CD8-positive, alpha-beta memory T cell (primary cell): ENCODE measurements at regions of chr2 and their contacts with region 1.

Region 1: GRCh38 chr2:190221429-190221828 is 98.2 kb downstream of the HIBCH start:
- DNase-seq: no peak
- H3K4me3 ChIP-seq: no peak overlapping the region
- H3K4me3 Mint-ChIP-seq: no peak overlapping the region
- H3K27ac ChIP-seq: no peak overlapping the region
- H3K27ac Mint-ChIP-seq: no peak overlapping the region
- H3K4me1 ChIP-seq: no peaks in the 10 kb centered on the region
- H3K4me1 Mint-ChIP-seq: peaks cover 0 to 5% (median 5%) of the 10 kb centered on the region in 3 donors
- H3K27me3 ChIP-seq: no peaks in the 10 kb centered on the region
- H3K27me3 Mint-ChIP-seq: no peaks in the 10 kb centered on the region

Region 2: DNA sequence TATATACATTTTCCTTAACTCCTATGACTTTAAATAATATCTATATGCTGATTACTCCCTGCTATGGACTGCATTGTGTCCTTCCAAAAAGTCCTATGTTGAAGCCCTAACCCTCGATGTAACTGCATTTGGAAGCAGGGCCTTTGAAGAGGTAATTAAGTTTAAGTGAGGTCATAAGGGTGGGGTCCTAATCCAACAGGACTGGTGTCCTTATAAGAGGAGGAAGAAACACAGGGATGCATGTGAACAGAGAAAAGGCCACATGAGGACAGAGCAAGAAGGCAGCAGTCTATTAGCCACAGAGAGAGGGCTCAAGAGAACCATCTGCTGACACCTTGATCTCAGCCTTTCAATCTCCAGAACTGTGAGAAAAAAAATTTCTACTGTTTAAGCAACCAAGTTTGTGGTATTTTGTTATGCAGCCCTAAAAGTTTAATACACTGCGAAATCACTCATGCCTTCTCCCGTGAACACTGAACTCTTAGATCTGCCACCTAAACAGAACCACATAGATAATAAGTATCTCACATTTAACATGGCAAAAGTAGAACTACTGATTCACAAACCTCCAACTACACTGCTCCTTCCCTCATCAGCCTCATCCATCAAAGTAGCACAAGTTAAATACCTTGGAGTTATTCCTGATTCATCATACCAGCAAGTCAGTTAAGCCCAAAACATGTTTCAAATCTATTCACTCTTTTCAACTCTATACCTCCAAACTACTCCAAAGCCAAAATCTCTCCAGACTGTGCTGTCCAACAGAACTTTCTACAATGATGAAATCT is 32.8 kb after region 1 on chr2:
- CTCF ChIA-PET with region 1: no interaction called
- POLR2A ChIA-PET with region 1: no interaction called
- DNase-seq: no peak
- H3K4me3 ChIP-seq: no peak overlapping the region
- H3K4me3 Mint-ChIP-seq: no peak overlapping the region
- H3K27ac ChIP-seq: no peak overlapping the region
- H3K27ac Mint-ChIP-seq: no peak overlapping the region
- H3K4me1 ChIP-seq: no peaks in the 10 kb centered on the region
- H3K4me1 Mint-ChIP-seq: no peaks in the 10 kb centered on the region
- H3K27me3 ChIP-seq: no peaks in the 10 kb centered on the region
- H3K27me3 Mint-ChIP-seq: no peaks in the 10 kb centered on the region

Region 3: GRCh38 chr2:190304404-190304803 is 83.0 kb after region 1 on chr2:
- CTCF ChIA-PET with region 1: no interaction called
- POLR2A ChIA-PET with region 1: interaction called, 14 read pairs
- DNase-seq: no peak
- H3K4me3 ChIP-seq: no peak overlapping the region
- H3K4me3 Mint-ChIP-seq: no peak overlapping the region
- H3K27ac ChIP-seq: no peak overlapping the region
- H3K27ac Mint-ChIP-seq: peak overlapping the region in 2 of 8 donors; percentile 15 to 55
- H3K4me1 ChIP-seq: no peaks in the 10 kb centered on the region
- H3K4me1 Mint-ChIP-seq: peaks cover 16 to 32% (median 32%) of the 10 kb centered on the region in 3 donors
- H3K27me3 ChIP-seq: no peaks in the 10 kb centered on the region
- H3K27me3 Mint-ChIP-seq: no peaks in the 10 kb centered on the region